ENCODE measurements at regions of chr4 and their contacts with region 1.

Region 1: GRCh38 chr4:68256284-68256683 is 10.8 kb upstream of the TMPRSS11B start:
- DNase-seq: no peak
- H3K4me3 ChIP-seq: no peak overlapping the region
- H3K27ac ChIP-seq: no peak overlapping the region
- H3K4me1 ChIP-seq: no peaks in the 10 kb centered on the region
- H3K27me3 ChIP-seq: no peaks in the 10 kb centered on the region
- CTCF ChIP-seq: no peak
- POLR2A ChIP-seq: no peak

Region 2: DNA sequence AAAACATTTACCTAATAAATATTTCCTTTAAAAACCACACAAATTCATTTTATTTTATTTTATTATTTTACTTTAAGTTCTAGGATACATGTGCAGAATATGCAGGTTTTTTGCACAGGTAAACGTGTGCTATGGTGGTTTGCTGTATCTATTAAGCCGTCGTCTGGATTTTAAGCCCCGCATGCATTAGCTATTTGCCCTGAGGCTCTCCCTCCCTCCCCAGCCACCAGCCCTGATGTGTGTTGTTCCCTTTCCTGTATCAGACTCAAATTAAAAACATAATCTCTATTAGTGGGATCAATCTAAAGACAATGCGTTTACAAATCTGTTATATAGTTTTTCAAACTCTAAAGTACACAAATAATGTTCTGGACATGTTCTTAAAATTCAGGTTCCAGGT is 1770.7 kb after region 1 on chr4:
- intact Hi-C with region 1: loop called (anchors 5 kb)
- DNase-seq: no peak
- H3K4me3 ChIP-seq: no peak overlapping the region
- H3K27ac ChIP-seq: no peak overlapping the region
- H3K4me1 ChIP-seq: no peaks in the 10 kb centered on the region
- H3K27me3 ChIP-seq: no peaks in the 10 kb centered on the region
- CTCF ChIP-seq: no peak
- POLR2A ChIP-seq: no peak

Measured in vagina (tissue), 2 donors.